ENCODE measurements at regions of chr19 and their contacts with region 1.

Region 1: GRCh38 chr19:46990991-46991676 is 28.5 kb upstream of the NPAS1 start:
- DNase-seq: no peak
- ATAC-seq: peak; percentile 64
- H3K4me3 Mint-ChIP-seq: no peak overlapping the region
- H3K27ac Mint-ChIP-seq: no peak overlapping the region
- H3K4me1 Mint-ChIP-seq: peaks cover 10% of the 10 kb centered on the region
- H3K27me3 Mint-ChIP-seq: no peaks in the 10 kb centered on the region
- CTCF ChIP-seq: no peak

Region 2: DNA sequence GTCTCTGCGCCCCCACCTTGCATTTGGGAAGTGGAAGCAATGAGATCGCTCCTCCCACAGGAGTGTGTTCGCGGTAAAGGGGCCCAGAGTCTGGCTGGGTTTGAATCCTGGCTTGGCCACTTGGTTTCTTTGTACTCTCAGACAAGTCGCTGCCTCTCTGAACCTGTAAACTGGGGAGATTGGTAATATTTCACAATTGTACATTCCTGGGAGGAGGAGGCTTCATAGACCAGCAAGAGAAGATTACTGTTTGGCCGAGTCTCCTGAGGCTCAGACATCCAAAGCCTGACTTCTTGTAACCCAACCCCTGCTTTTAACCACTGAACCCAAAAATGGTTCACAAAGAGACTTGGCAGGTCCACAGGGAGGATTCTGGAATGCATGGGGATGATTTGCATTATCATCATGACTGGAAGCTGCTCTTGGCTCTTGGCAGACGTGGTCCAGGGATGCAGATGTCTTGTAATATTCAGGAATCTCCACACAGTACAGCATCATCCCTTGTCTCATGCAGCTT is 231.3 kb before region 1 on chr19:
- CTCF ChIA-PET with region 1: interaction called, 7 read pairs
- POLR2A ChIA-PET with region 1: interaction called, 3 read pairs
- intact Hi-C with region 1: loop called (anchors 5 kb)
- DNase-seq: no peak
- ATAC-seq: no peak
- H3K4me3 Mint-ChIP-seq: no peak overlapping the region
- H3K27ac Mint-ChIP-seq: no peak overlapping the region
- H3K4me1 Mint-ChIP-seq: peaks cover 3% of the 10 kb centered on the region
- H3K27me3 Mint-ChIP-seq: no peaks in the 10 kb centered on the region
- CTCF ChIP-seq: no peak